Posterior vena cava (tissue), 2 donors: ENCODE measurements at regions of chr12 and their contacts with region 1.

Region 1: GRCh38 chr12:11771356-11771755 is 121.9 kb downstream of the ETV6 start:
- DNase-seq: no peak

Region 2: GRCh38 chr12:11812586-11813427 is 41.5 kb after region 1 on chr12:
- intact Hi-C with region 1: loop called in 1 of 2 experiments (anchors 1 kb)
- DNase-seq: no peak